ENCODE measurements at regions of chr18 and their contacts with region 1.

Region 1: GRCh38 chr18:21704603-21705364 is at the start of gene ABHD3:
- DNase-seq: peak; percentile 89
- ATAC-seq: peak; percentile 92
- H3K4me3 Mint-ChIP-seq: peak within 1 kb of the TSS; percentile 95
- H3K27ac Mint-ChIP-seq: peak within 1 kb of the TSS; percentile 94
- H3K4me1 Mint-ChIP-seq: peaks cover 25% of the 10 kb centered on the region
- H3K27me3 Mint-ChIP-seq: no peaks in the 10 kb centered on the region
- CTCF ChIP-seq: no peak
- total RNA-seq, gene ABHD3: 22.2 and 29.5 TPM in 2 replicates

Region 2: DNA sequence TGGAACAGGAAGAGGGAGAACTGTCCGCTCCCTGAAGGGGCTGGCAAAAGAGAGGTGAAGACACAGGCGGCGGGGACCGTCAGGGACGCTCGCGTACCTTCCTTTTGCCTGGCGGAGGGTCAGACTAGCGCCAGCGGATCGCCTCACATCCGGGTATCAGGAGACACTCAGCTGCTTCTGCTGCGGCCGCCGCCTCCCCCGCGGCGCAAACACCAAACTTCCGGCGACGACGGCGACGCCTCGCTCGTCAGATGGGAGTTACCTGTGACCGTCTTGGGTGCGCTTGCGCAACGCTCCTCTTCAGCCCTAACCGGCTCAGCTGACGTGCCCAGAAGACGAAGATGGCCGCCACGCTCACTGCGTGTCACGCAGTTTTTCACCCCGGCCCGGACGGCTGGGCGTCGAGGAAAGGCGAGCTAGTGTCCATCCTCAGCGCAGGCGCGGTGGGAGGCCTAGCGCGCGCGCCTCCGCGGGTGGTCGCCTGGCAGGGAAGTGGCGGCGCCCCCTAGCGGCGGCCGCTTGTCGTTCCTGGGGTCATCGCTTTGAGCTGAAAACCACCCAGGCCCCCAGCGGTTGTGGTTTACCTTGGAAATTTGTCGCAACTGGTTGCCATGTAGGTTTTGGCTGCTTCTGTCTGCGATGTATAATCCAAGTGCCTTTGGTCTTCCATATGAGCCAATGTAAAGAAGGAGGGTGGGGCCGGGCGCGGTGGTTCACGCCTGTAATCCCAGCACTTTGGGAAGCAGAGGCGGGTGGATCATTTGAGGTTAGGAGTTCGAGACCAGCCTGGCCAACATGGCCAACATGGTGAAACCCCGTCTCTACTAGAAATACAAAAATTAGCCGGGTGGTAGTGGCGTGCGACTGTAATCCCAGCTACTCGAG is 104.0 kb before region 1 on chr18 and contains the start of gene ESCO1:
- CTCF ChIA-PET with region 1: interaction called, 8 read pairs
- POLR2A ChIA-PET with region 1: interaction called, 43 read pairs
- intact Hi-C with region 1: loop called (anchors 1 kb)
- DNase-seq: peak; percentile 88
- ATAC-seq: peak; percentile 80
- H3K4me3 Mint-ChIP-seq: peak within 1 kb of the TSS; percentile 96
- H3K27ac Mint-ChIP-seq: peak within 1 kb of the TSS; percentile 99
- H3K4me1 Mint-ChIP-seq: peaks cover 50% of the 10 kb centered on the region
- H3K27me3 Mint-ChIP-seq: no peaks in the 10 kb centered on the region
- CTCF ChIP-seq: peak; percentile 78
- total RNA-seq, gene ESCO1: 18.2 and 19.6 TPM in 2 replicates

Region 3: GRCh38 chr18:21636769-21637168 is 68.0 kb before region 1 on chr18:
- CTCF ChIA-PET with region 1: no interaction called
- POLR2A ChIA-PET with region 1: no interaction called
- intact Hi-C with region 1: loop called (anchors 5 kb)
- DNase-seq: no peak
- ATAC-seq: no peak
- H3K4me3 Mint-ChIP-seq: no peak overlapping the region
- H3K27ac Mint-ChIP-seq: peak overlapping the region; percentile 46
- H3K4me1 Mint-ChIP-seq: peaks cover 15% of the 10 kb centered on the region
- H3K27me3 Mint-ChIP-seq: no peaks in the 10 kb centered on the region
- CTCF ChIP-seq: no peak

Region 4: GRCh38 chr18:21682371-21683051 is 22.3 kb before region 1 on chr18:
- CTCF ChIA-PET with region 1: interaction called, 4 read pairs
- POLR2A ChIA-PET with region 1: interaction called, 23 read pairs
- intact Hi-C with region 1: loop called (anchors 1 kb)
- DNase-seq: no peak
- ATAC-seq: peak; percentile 54
- H3K4me3 Mint-ChIP-seq: no peak overlapping the region
- H3K27ac Mint-ChIP-seq: no peak overlapping the region
- H3K4me1 Mint-ChIP-seq: peaks cover 30% of the 10 kb centered on the region
- H3K27me3 Mint-ChIP-seq: no peaks in the 10 kb centered on the region
- CTCF ChIP-seq: no peak

Region 5: DNA sequence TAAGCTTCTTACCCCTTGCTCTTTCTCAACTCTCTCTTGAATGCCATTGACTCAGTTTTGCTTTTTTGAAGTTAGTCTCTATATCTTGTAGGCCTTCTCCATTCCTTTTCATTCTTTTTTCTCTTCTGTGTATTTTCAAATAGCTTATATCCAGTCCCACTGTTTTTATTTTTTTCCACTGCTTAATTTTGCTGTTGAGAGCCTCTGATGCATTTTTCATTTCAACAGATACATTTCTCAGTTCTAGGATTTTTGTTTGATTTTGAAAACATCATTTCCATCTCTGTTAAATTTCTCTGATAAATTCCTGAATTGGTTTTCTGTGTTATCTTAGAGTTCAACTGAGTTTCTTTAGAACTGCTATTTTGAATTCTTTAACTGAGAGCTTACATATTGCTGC is 81.7 kb after region 1 on chr18:
- CTCF ChIA-PET with region 1: no interaction called
- POLR2A ChIA-PET with region 1: no interaction called
- intact Hi-C with region 1: loop called (anchors 10 kb)
- DNase-seq: no peak
- ATAC-seq: no peak
- H3K4me3 Mint-ChIP-seq: no peak overlapping the region
- H3K27ac Mint-ChIP-seq: no peak overlapping the region
- H3K4me1 Mint-ChIP-seq: no peaks in the 10 kb centered on the region
- H3K27me3 Mint-ChIP-seq: no peaks in the 10 kb centered on the region
- CTCF ChIP-seq: no peak

Region 6: DNA sequence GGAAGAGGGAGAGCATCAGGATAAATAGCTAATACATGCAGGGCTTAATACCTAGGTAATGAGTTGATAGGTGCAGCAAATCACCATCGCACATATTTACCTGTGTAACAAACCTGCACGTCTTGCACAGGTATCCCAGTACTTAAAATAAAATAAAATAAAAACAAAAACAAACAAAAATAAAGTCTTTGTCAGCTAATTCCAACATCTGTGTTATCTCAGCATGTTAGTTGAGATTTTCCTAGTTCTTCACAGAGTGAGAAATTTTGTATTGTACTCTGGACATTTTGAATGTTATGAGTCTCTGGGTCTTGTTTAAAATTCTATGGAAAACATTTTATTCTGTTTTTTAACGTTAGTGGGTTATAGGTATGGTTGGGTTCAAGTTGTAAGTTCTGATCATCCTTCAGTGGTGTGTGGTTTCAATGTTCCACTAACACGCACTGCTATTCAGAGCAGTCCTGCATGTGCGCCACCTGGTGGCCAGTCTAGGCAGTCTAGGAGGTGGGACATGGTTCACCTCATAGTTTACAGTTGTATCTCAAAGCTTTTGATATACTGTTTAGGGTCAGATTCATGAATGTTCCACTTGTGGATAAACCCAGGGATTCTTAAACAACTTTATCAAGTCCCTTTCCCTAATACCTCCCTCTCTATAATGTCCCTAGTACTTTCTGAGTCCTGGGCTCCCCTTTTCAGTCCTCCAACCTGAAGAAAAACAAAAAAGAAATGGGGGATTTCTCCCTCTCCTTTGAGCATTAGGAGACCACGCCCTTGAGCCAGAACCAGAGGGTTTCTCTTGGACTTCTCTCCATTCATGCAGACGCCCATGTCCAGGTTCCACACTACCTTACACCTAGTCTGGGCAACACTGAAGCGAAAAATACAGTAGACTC is 251.2 kb after region 1 on chr18:
- CTCF ChIA-PET with region 1: no interaction called
- POLR2A ChIA-PET with region 1: no interaction called
- intact Hi-C with region 1: loop called (anchors 5 kb)
- DNase-seq: peak; percentile 69
- ATAC-seq: peak; percentile 78
- H3K4me3 Mint-ChIP-seq: no peak overlapping the region
- H3K27ac Mint-ChIP-seq: no peak overlapping the region
- H3K4me1 Mint-ChIP-seq: no peaks in the 10 kb centered on the region
- H3K27me3 Mint-ChIP-seq: peaks cover 15% of the 10 kb centered on the region
- CTCF ChIP-seq: peak; percentile 47

Measured in activated B cell treated with CpG ODN at 0.5 μM for 24 hours (primary cell).